ENCODE measurements at regions of chr2 and their contacts with region 1.

Region 1: DNA sequence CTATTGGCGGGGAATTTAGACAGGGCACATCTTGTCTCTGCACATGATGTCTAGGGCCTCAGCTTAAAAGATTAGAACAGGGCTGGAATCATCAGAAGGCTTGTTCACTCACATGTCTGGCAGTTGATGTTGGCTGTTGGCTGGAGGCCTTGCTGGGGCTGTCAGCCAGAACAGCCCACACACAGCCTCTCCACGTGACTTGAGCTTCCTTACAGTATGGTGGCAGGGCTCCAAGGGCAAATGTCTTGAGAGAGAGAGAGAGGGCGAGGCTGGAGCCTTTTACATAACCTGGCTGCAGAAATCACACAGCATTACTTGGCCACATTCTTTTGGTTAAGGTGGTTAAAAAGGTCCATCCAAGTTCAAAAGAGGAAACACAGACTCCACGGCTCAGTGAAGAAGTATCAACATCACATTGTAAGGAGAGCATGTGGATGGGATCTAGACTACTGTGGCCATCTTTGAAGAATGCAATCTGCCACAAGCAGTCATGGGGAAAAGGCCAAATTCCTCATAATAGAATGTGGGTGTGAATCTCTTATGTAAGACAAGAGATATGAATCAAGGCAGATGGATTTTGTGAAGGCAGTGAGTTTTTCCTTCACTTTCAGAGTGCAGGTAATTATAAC is 30.4 kb downstream of the SRSF7 start:
- DNase-seq: peak; percentile 75 to 84 (median 80)
- ATAC-seq: peak; percentile 86 to 95 (median 94)
- H3K4me3 ChIP-seq: no peak overlapping the region
- H3K27ac ChIP-seq: peak overlapping the region; percentile 2 to 76 (median 48)
- H3K4me1 ChIP-seq: peaks cover 0 to 35% (median 21%) of the 10 kb centered on the region in 12 donors
- H3K27me3 ChIP-seq: no peaks in the 10 kb centered on the region
- CTCF ChIP-seq: no peak
- POLR2A ChIP-seq: no peak

Region 2: GRCh38 chr2:38665854-38666555 is 54.7 kb before region 1 on chr2 and contains the start of gene GALM:
- intact Hi-C with region 1: loop called in 2 of 10 experiments (anchors 5 kb)
- DNase-seq: peak; percentile 82 to 89 (median 86)
- ATAC-seq: peak; percentile 96 to 97 (median 97)
- H3K4me3 ChIP-seq: peak within 1 kb of the TSS; percentile 33 to 88 (median 70)
- H3K27ac ChIP-seq: peak within 1 kb of the TSS; percentile 11 to 93 (median 71)
- H3K4me1 ChIP-seq: peaks cover 0 to 56% (median 17%) of the 10 kb centered on the region in 12 donors
- H3K27me3 ChIP-seq: no peaks in the 10 kb centered on the region
- CTCF ChIP-seq: peak in 1 of 12 donors; percentile 10
- POLR2A ChIP-seq: peak in 1 of 2 donors; percentile 69
- total RNA-seq, gene GALM: 6.3 to 25.3 (median 11.9) TPM